ENCODE measurements at regions of chr11 and their contacts with region 1.

Region 1: GRCh38 chr11:94973099-94973968 is at the starts of genes CWC15 and KDM4D:
- DNase-seq: peak; percentile 88 to 93 (median 88)
- H3K4me3 ChIP-seq: peak within 1 kb of the TSS; percentile 67 to 93 (median 91)
- H3K4me3 Mint-ChIP-seq: peak within 1 kb of the TSS; percentile 96 to 100
- H3K27ac ChIP-seq: peak within 1 kb of the TSS; percentile 71 to 94
- H3K27ac Mint-ChIP-seq: peak within 1 kb of the TSS; percentile 92 to 99 (median 95)
- H3K4me1 ChIP-seq: peaks cover 12 to 16% of the 10 kb centered on the region in 2 donors
- H3K4me1 Mint-ChIP-seq: peaks cover 5% of the 10 kb centered on the region
- H3K27me3 ChIP-seq: peaks cover 0 to 2% of the 10 kb centered on the region in 2 donors
- H3K27me3 Mint-ChIP-seq: peaks cover 0 to 4% (median 2%) of the 10 kb centered on the region in 3 donors
- CTCF ChIP-seq: no peak
- polyA plus RNA-seq, gene CWC15: 27.5 to 43.8 (median 38.9) TPM
- polyA plus RNA-seq, gene KDM4D: 0.03 to 0.16 TPM in 2 of 3 donors, not detected in the other

Region 2: GRCh38 chr11:94623120-94623735 is 350.1 kb before region 1 on chr11:
- intact Hi-C with region 1: loop called in 1 of 2 experiments (anchors 5 kb)
- DNase-seq: peak; percentile 58 to 73 (median 71)
- H3K4me3 ChIP-seq: no peak overlapping the region
- H3K4me3 Mint-ChIP-seq: peak overlapping the region in 1 of 2 donors; percentile 49
- H3K27ac ChIP-seq: no peak overlapping the region
- H3K27ac Mint-ChIP-seq: peak overlapping the region in 4 of 7 donors; percentile 7 to 78 (median 50)
- H3K4me1 ChIP-seq: no peaks in the 10 kb centered on the region
- H3K4me1 Mint-ChIP-seq: peaks cover 2% of the 10 kb centered on the region
- H3K27me3 ChIP-seq: no peaks in the 10 kb centered on the region
- H3K27me3 Mint-ChIP-seq: no peaks in the 10 kb centered on the region
- CTCF ChIP-seq: peak; percentile 85

Region 3: GRCh38 chr11:94926698-94927237 is 46.6 kb before region 1 on chr11:
- intact Hi-C with region 1: no loop called
- DNase-seq: peak in 1 of 3 donors; percentile 4
- H3K4me3 ChIP-seq: no peak overlapping the region
- H3K4me3 Mint-ChIP-seq: no peak overlapping the region
- H3K27ac ChIP-seq: no peak overlapping the region
- H3K27ac Mint-ChIP-seq: peak overlapping the region in 2 of 7 donors; percentile 4 to 30
- H3K4me1 ChIP-seq: peaks cover 11 to 13% of the 10 kb centered on the region in 2 donors
- H3K4me1 Mint-ChIP-seq: peaks cover 37% of the 10 kb centered on the region
- H3K27me3 ChIP-seq: no peaks in the 10 kb centered on the region
- H3K27me3 Mint-ChIP-seq: peaks cover 0 to 3% (median 0%) of the 10 kb centered on the region in 3 donors
- CTCF ChIP-seq: no peak

Region 4: DNA sequence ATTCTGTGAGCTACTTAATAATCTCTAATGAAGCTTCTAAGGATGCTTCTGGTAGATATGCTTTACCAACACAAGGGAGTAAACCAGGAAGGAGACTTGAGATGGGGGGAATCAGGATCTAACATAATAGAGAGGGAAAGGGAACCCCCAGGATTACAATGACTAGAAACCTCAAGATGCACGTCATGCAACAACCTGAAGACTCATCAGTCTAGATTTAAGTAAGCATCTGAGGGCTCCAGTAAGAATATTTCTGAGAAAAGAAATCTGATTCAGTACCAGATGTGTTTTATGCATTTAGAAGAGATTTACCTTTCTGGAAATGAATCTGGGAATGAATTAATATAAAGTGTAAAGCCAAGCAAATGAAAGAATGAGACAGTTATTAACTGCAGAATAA is 15.4 kb after region 1 on chr11:
- intact Hi-C with region 1: no loop called
- DNase-seq: no peak
- H3K4me3 ChIP-seq: no peak overlapping the region
- H3K4me3 Mint-ChIP-seq: no peak overlapping the region
- H3K27ac ChIP-seq: no peak overlapping the region
- H3K27ac Mint-ChIP-seq: no peak overlapping the region
- H3K4me1 ChIP-seq: no peaks in the 10 kb centered on the region
- H3K4me1 Mint-ChIP-seq: no peaks in the 10 kb centered on the region
- H3K27me3 ChIP-seq: peaks cover 2 to 4% of the 10 kb centered on the region in 2 donors
- H3K27me3 Mint-ChIP-seq: peaks cover 1 to 6% (median 3%) of the 10 kb centered on the region in 3 donors
- CTCF ChIP-seq: no peak

Region 5: GRCh38 chr11:95089620-95090542 is 116.5 kb after region 1 on chr11 and contains the start of gene ENDOD1:
- intact Hi-C with region 1: loop called in 1 of 2 experiments (anchors 5 kb)
- DNase-seq: peak; percentile 74 to 77 (median 76)
- H3K4me3 ChIP-seq: peak within 1 kb of the TSS; percentile 62 to 88 (median 82)
- H3K4me3 Mint-ChIP-seq: peak within 1 kb of the TSS; percentile 90 to 95
- H3K27ac ChIP-seq: peak within 1 kb of the TSS; percentile 47 to 83
- H3K27ac Mint-ChIP-seq: peak within 1 kb of the TSS; percentile 85 to 94 (median 90)
- H3K4me1 ChIP-seq: peaks cover 14 to 23% of the 10 kb centered on the region in 2 donors
- H3K4me1 Mint-ChIP-seq: peaks cover 23% of the 10 kb centered on the region
- H3K27me3 ChIP-seq: peaks cover 7 to 8% of the 10 kb centered on the region in 2 donors
- H3K27me3 Mint-ChIP-seq: peaks cover 15 to 19% (median 17%) of the 10 kb centered on the region in 3 donors
- CTCF ChIP-seq: no peak
- polyA plus RNA-seq, gene ENDOD1: 1.3 to 3.4 (median 3.2) TPM